ENCODE measurements at regions of chr9 and their contacts with region 1.

Region 1: GRCh38 chr9:74570879-74571512 is 73.9 kb downstream of the RORB start:
- DNase-seq: no peak
- ATAC-seq: no peak
- H3K4me3 ChIP-seq: no peak overlapping the region
- H3K27ac ChIP-seq: no peak overlapping the region
- H3K4me1 ChIP-seq: no peaks in the 10 kb centered on the region
- H3K27me3 ChIP-seq: peaks cover 0 to 6% (median 0%) of the 10 kb centered on the region in 9 donors
- CTCF ChIP-seq: peak; percentile 40 to 74 (median 62)
- POLR2A ChIP-seq: no peak

Region 2: GRCh38 chr9:73200694-73201452 is 1370.1 kb before region 1 on chr9:
- intact Hi-C with region 1: loop called in 4 of 10 experiments (anchors 5 to 10 kb)
- DNase-seq: no peak
- ATAC-seq: no peak
- H3K4me3 ChIP-seq: no peak overlapping the region
- H3K27ac ChIP-seq: no peak overlapping the region
- H3K4me1 ChIP-seq: no peaks in the 10 kb centered on the region
- H3K27me3 ChIP-seq: peaks cover 0 to 19% (median 0%) of the 10 kb centered on the region in 9 donors
- CTCF ChIP-seq: peak; percentile 27 to 63 (median 50)
- POLR2A ChIP-seq: no peak

Region 3: GRCh38 chr9:74309654-74310053 is 261.3 kb before region 1 on chr9:
- intact Hi-C with region 1: loop called in 4 of 10 experiments (anchors 5 to 10 kb)
- DNase-seq: no peak
- ATAC-seq: peak in 2 of 4 donors; percentile 32 to 33
- H3K4me3 ChIP-seq: no peak overlapping the region
- H3K27ac ChIP-seq: no peak overlapping the region
- H3K4me1 ChIP-seq: no peaks in the 10 kb centered on the region
- H3K27me3 ChIP-seq: no peaks in the 10 kb centered on the region
- CTCF ChIP-seq: peak in 6 of 12 donors; percentile 3 to 32 (median 20)
- POLR2A ChIP-seq: no peak

Region 4: GRCh38 chr9:74322661-74323314 is 248.2 kb before region 1 on chr9:
- intact Hi-C with region 1: loop called in 2 of 10 experiments (anchors 10 kb)
- DNase-seq: no peak
- ATAC-seq: no peak
- H3K4me3 ChIP-seq: no peak overlapping the region
- H3K27ac ChIP-seq: no peak overlapping the region
- H3K4me1 ChIP-seq: no peaks in the 10 kb centered on the region
- H3K27me3 ChIP-seq: no peaks in the 10 kb centered on the region
- CTCF ChIP-seq: no peak
- POLR2A ChIP-seq: no peak

Region 5: GRCh38 chr9:74729136-74729695 is 158.2 kb after region 1 on chr9:
- intact Hi-C with region 1: no loop called
- DNase-seq: no peak
- ATAC-seq: no peak
- H3K4me3 ChIP-seq: peak overlapping the region in 1 of 12 donors; percentile 2
- H3K27ac ChIP-seq: no peak overlapping the region
- H3K4me1 ChIP-seq: no peaks in the 10 kb centered on the region
- H3K27me3 ChIP-seq: no peaks in the 10 kb centered on the region
- CTCF ChIP-seq: no peak
- POLR2A ChIP-seq: no peak

Measured in heart left ventricle (tissue), 16 donors.